ENCODE measurements at regions of chr2 and their contacts with region 1.

Region 1: GRCh38 chr2:75646583-75647425 is at the start of gene MRPL19:
- DNase-seq: peak; percentile 73
- ATAC-seq: peak; percentile 97
- H3K4me3 Mint-ChIP-seq: peak within 1 kb of the TSS; percentile 89
- H3K27ac Mint-ChIP-seq: peak within 1 kb of the TSS; percentile 93
- H3K4me1 Mint-ChIP-seq: peaks cover 19% of the 10 kb centered on the region
- H3K27me3 Mint-ChIP-seq: no peaks in the 10 kb centered on the region
- total RNA-seq, gene MRPL19: 34.0 to 37.1 TPM

Region 2: GRCh38 chr2:75698918-75699317 is 52.1 kb after region 1 on chr2:
- POLR2A ChIA-PET with region 1: no interaction called
- DNase-seq: no peak
- ATAC-seq: no peak
- H3K4me3 Mint-ChIP-seq: no peak overlapping the region
- H3K27ac Mint-ChIP-seq: no peak overlapping the region
- H3K4me1 Mint-ChIP-seq: no peaks in the 10 kb centered on the region
- H3K27me3 Mint-ChIP-seq: no peaks in the 10 kb centered on the region

Region 3: DNA sequence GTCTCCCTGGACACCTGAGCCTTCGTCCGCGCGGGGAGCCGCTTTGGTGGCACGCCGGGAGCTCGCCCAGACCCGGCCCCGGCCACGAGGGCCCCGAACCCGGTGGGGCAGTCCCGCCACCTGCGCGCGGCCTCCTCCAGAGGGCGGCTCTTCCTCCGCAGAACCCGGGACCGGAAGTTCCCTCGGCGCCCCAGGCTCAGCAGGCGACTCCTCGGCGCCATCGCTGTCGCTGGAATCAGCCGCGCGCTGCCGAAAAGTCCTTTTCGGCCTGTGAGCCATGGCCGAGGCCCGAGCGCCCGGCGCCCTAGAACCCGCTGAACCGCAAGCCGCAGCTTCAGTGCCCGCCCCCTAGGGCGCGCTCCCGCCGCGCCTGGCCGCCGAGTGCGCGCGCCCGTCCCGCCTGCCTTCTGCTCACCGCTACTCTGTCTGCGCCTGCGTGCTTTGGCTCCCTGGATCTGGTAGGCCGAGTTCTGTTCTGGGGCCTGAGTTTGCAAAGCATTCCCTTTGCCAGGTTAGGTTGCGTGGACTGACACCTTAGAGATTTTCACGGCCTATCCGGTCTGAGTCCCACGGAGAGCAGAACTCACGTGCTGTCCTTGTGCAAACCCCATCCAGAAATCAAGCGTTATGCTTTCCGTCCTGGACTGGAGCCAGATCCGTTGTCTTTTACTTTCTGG is 63.9 kb after region 1 on chr2 and contains the start of gene GCFC2:
- POLR2A ChIA-PET with region 1: interaction called, 26 read pairs
- DNase-seq: peak; percentile 91
- ATAC-seq: peak; percentile 94
- H3K4me3 Mint-ChIP-seq: peak within 1 kb of the TSS; percentile 93
- H3K27ac Mint-ChIP-seq: peak within 1 kb of the TSS; percentile 98
- H3K4me1 Mint-ChIP-seq: peaks cover 25% of the 10 kb centered on the region
- H3K27me3 Mint-ChIP-seq: peaks cover 4% of the 10 kb centered on the region
- total RNA-seq, gene GCFC2: 20.0 to 23.9 TPM